SK-N-SH (cell line): ENCODE measurements at regions of chrX and their contacts with region 1.

Region 1: DNA sequence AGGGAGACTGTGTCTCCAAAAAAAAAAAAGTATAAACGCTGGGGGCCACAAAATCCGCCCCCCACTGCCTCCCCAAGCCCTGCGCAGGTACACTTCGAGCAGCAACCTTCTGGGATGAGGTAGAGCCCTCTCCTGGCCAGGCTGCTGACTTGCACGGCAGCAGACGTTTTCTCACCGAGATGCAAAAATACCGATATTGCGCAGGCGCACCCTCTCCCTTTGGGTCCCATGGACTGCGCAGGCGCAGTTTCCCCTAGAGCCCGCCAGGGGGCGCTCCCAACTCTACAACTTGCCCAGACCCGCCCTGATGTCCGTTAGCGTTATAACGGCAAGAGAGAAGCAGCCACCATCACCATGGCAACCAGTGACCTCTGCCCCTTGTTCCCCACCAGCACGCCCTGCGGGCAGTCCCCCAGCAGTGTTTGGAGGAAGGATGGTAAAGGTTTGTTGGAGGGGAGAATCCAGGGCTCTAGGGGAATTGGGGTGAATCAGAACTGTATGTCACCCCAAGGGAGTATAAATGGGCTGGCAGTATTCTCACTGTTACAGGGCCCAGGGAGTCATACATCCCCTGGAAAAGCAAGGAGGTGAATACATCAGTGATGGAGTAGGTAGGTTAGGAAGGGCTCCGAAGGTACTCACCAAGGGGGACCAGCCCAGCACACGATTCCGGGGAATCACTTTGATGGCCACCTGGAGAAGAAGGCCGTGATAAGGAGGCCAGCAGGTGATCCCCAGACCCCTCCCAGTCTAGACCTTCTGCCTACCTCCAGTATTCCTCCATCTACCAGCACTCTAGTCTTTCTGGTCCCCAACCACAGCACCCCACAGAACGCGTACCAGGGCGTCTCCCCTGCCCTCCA is 1.5 kb downstream of the PIM2 start:
- DNase-seq: peak; percentile 94
- H3K4me3 ChIP-seq: peak overlapping the region; percentile 48 to 61
- H3K27ac ChIP-seq: peak overlapping the region; percentile 39 to 40; a peak in 2 of 4 replicates
- H3K4me1 ChIP-seq: peaks cover 5 to 26% of the 10 kb centered on the region in 2 experiments; a peak in 2 of 4 replicates
- H3K27me3 ChIP-seq: no peaks in the 10 kb centered on the region
- CTCF ChIP-seq: peak; percentile 99
- EP300 ChIP-seq: no peak
- RAD21 ChIP-seq: peak; percentile 68

Region 2: DNA sequence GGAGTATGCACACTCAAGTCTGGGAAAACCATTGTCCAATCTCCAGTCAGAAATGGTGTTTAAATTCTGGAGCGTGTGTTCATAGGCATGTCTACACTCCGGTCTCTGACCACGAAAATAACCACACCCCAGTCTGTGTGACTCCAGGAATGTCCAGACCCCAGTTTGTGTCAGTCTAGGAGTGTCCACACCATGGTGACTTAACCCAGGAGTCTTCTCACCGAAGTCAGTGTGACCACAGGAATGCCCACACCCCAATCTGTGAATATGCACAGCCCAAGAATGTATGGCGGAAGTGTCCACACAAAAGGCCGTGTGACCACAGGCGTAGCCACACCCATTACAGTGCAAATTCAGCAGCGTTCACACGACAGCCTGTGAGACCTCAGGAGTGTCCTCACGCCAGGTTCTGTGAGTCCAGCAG is 430.0 kb before region 1 on chrX:
- CTCF ChIA-PET with region 1: no interaction called
- POLR2A ChIA-PET with region 1: no interaction called
- DNase-seq: no peak
- H3K4me3 ChIP-seq: no peak overlapping the region
- H3K27ac ChIP-seq: no peak overlapping the region
- H3K4me1 ChIP-seq: no peaks in the 10 kb centered on the region
- H3K27me3 ChIP-seq: no peaks in the 10 kb centered on the region
- CTCF ChIP-seq: no peak
- EP300 ChIP-seq: no peak
- RAD21 ChIP-seq: no peak

Region 3: DNA sequence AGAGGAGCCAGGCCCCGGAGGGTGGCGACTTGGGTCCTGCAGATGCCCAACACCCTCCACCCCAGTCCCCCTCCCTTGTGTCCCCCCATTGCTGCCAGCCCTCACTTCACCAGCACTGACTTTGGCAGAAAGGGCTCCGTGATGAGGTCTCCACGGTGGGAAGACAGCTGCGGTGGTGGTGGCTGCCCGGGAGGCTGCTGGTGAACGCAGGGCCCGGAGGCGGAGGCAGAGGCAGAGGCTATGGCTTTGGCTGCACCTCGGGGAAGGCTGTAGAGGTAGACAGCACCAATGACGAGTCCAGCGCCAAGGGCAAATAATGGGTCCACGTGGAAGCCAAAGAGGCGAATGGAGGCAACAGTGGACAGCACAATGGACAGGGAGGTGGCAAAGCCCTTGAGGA is 12.7 kb before region 1 on chrX:
- CTCF ChIA-PET with region 1: interaction called, 12 read pairs
- POLR2A ChIA-PET with region 1: no interaction called
- DNase-seq: no peak
- H3K4me3 ChIP-seq: no peak overlapping the region
- H3K27ac ChIP-seq: no peak overlapping the region
- H3K4me1 ChIP-seq: peaks cover 0 to under 1% of the 10 kb centered on the region in 2 experiments; a peak in 1 of 4 replicates
- H3K27me3 ChIP-seq: no peaks in the 10 kb centered on the region
- CTCF ChIP-seq: no peak
- EP300 ChIP-seq: no peak
- RAD21 ChIP-seq: no peak

Region 4: DNA sequence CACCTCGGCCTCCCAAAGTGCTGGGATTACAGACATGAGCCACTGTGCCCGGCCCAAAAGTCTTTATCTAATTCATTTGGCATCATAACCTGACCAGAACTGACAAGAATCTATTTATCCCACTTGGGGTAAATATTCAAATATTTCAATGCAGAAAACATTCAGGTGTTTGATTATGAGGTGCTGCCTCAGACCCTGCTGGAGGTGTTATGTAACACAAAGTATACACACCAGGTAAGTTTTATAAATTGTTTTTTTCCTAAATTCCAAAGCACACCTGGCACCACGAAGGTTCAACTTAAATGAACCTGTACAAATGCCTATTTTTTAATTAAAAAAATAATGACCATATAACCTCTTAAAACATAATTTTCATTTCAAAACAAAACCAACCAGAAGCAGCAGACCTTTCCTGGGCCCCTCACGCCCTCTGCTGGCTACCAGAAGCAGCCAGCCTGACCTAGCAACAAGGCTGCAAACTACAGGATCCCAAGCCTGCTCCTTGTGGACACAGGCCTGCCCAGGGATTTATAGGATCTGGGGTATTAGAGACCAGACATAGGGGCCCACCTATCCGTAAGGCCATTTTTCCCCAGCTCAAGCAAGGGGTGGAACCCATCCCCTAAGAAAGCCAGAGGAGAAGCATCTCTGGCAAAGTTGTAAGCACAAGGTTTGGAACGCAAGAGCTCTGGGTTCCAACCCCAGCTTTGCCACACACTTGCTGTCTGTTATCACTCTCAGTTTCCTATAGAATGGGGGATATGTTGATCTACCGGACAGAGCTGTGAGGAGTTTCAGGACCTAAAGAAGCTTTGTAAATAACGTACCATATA is 28.4 kb after region 1 on chrX:
- CTCF ChIA-PET with region 1: no interaction called
- POLR2A ChIA-PET with region 1: no interaction called
- DNase-seq: peak; percentile 75
- H3K4me3 ChIP-seq: no peak overlapping the region
- H3K27ac ChIP-seq: no peak overlapping the region
- H3K4me1 ChIP-seq: no peaks in the 10 kb centered on the region; a peak in 1 of 4 replicates
- H3K27me3 ChIP-seq: no peaks in the 10 kb centered on the region
- CTCF ChIP-seq: peak; percentile 95
- EP300 ChIP-seq: no peak
- RAD21 ChIP-seq: peak; percentile 73